ENCODE measurements at regions of chr11 and their contacts with region 1.

Region 1: GRCh38 chr11:10413268-10413667 is 41.8 kb upstream of the AMPD3 start:
- DNase-seq: peak; percentile 44 to 74 (median 56)
- H3K4me3 ChIP-seq: no peak overlapping the region
- H3K4me3 Mint-ChIP-seq: no peak overlapping the region
- H3K27ac ChIP-seq: peak overlapping the region in 1 of 2 donors; percentile 69
- H3K27ac Mint-ChIP-seq: no peak overlapping the region
- H3K4me1 ChIP-seq: peaks cover 41 to 43% of the 10 kb centered on the region in 2 donors
- H3K4me1 Mint-ChIP-seq: peaks cover 55% of the 10 kb centered on the region
- H3K27me3 ChIP-seq: no peaks in the 10 kb centered on the region
- H3K27me3 Mint-ChIP-seq: peaks cover 0 to 4% (median 2%) of the 10 kb centered on the region in 3 donors
- CTCF ChIP-seq: no peak

Region 2: DNA sequence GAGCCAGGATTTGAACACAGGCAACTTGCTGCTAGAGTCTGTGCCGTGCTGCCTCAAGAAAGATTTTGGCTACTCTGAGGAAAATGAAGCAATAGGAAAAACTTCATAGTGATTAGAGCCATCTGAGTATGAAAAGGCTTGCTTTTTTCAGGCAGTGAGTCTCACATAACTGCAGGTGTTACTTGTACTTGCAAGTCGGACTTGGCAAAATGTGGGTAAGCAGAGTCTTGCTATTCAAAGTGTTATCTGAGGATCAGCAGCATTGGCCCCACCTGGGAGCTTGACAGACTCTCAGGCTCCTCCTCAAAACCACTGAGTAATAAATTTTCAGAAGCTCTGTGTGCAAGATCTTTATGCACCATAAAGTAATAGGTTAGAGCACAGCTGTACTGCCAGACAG is 109.7 kb after region 1 on chr11:
- intact Hi-C with region 1: no loop called
- DNase-seq: no peak
- H3K4me3 ChIP-seq: no peak overlapping the region
- H3K4me3 Mint-ChIP-seq: no peak overlapping the region
- H3K27ac ChIP-seq: no peak overlapping the region
- H3K27ac Mint-ChIP-seq: no peak overlapping the region
- H3K4me1 ChIP-seq: no peaks in the 10 kb centered on the region
- H3K4me1 Mint-ChIP-seq: no peaks in the 10 kb centered on the region
- H3K27me3 ChIP-seq: no peaks in the 10 kb centered on the region
- H3K27me3 Mint-ChIP-seq: no peaks in the 10 kb centered on the region
- CTCF ChIP-seq: no peak

Region 3: DNA sequence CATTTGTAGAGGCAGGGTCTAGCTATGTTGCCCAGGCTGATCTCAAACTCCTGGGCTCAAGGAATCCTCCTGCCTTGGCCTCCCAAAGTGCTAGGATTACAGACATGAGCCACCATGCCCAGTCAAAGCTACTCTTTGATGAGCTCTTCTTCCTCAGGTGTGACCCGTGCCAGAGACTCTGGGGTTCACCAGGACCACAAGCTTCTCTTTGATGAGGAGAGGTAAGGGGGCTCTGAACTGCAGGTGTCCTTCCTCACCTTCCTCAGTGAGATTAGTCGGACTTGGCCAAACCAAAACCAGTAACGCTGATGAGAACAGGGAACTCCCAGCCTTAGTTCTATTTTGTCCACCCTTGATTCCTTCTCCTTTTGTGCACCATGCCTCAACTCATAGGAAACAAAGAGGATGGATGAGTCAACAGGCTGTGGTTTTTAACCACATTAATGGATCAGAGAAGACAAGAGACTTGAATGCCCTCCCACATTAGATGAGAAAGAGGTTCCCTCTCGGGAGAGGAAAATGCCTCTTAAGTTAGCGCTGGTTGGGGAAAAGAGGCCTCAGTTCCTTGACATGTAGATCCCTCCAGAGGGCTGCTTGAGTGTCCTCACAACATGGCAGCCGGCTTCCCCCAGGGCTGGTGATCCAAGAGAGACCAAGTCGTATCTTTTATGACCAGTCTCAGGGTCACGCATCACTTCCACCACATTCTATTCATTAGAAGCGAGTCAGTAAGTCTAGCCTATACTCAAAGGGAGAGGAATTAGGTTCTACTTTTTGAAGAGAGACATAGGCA is 312.0 kb after region 1 on chr11:
- intact Hi-C with region 1: loop called in 1 of 2 experiments (anchors 5 kb)
- DNase-seq: peak; percentile 89 to 95 (median 95)
- H3K4me3 ChIP-seq: peak overlapping the region in 1 of 3 experiments; percentile 43
- H3K4me3 Mint-ChIP-seq: peak overlapping the region in 1 of 2 donors; percentile 68
- H3K27ac ChIP-seq: peak overlapping the region in 1 of 2 donors; percentile 61
- H3K27ac Mint-ChIP-seq: peak overlapping the region; percentile 33 to 89 (median 85)
- H3K4me1 ChIP-seq: peaks cover 33 to 38% of the 10 kb centered on the region in 2 donors
- H3K4me1 Mint-ChIP-seq: peaks cover 35% of the 10 kb centered on the region
- H3K27me3 ChIP-seq: peaks cover 44 to 60% of the 10 kb centered on the region in 2 donors
- H3K27me3 Mint-ChIP-seq: peaks cover 67 to 86% (median 68%) of the 10 kb centered on the region in 3 donors
- CTCF ChIP-seq: no peak